ENCODE measurements at regions of chr3 and their contacts with region 1.

Region 1: DNA sequence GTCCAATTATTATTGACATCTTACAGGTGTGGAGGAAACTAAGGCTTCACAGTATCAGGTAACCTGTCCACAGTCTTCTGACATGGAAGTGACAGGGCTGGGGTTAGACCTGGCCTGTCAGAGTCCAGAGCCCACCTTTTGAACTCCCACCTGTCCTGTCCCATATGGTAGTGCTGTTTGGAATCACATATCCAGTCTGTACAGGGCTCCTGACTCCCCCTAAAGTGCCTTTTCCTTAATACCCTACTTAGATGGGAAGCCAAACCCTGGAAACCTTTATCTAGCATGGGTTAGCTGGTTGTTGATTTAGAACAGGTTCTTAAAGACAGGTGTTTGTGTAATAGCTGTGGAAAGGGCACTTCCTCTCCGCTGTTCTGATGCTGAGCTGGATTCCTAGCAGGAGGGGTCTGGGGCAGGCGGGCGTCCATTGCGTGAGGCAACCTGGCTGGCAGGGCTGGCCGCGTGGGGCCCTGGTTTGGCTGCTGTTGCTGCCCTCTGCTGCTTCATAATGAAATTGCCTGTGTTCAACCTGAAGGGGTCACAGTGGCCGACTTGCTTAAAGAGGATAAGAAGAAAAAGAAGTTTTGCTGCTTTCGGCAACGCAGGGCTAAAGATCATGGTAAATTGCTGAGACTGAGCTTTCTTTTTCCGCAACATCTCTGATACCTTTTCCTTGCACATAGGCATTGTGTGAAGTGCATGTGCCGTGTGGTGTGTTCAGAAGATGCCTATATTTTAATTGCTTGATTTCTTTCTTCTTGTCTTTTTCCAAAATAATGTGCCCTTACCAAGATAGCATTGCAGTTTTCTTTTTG is 136.2 kb downstream of the CHDH start:
- DNase-seq: peak; percentile 23 to 95 (median 68)

Region 2: GRCh38 chr3:53303957-53304356 is 406.1 kb before region 1 on chr3:
- intact Hi-C with region 1: loop called (anchors 1 kb)
- DNase-seq: no peak

Region 3: GRCh38 chr3:53375019-53375418 is 335.0 kb before region 1 on chr3:
- intact Hi-C with region 1: loop called (anchors 2 kb)
- DNase-seq: peak; percentile 32 to 95 (median 62)